ENCODE measurements at regions of chr3 and their contacts with region 1.

Region 1: DNA sequence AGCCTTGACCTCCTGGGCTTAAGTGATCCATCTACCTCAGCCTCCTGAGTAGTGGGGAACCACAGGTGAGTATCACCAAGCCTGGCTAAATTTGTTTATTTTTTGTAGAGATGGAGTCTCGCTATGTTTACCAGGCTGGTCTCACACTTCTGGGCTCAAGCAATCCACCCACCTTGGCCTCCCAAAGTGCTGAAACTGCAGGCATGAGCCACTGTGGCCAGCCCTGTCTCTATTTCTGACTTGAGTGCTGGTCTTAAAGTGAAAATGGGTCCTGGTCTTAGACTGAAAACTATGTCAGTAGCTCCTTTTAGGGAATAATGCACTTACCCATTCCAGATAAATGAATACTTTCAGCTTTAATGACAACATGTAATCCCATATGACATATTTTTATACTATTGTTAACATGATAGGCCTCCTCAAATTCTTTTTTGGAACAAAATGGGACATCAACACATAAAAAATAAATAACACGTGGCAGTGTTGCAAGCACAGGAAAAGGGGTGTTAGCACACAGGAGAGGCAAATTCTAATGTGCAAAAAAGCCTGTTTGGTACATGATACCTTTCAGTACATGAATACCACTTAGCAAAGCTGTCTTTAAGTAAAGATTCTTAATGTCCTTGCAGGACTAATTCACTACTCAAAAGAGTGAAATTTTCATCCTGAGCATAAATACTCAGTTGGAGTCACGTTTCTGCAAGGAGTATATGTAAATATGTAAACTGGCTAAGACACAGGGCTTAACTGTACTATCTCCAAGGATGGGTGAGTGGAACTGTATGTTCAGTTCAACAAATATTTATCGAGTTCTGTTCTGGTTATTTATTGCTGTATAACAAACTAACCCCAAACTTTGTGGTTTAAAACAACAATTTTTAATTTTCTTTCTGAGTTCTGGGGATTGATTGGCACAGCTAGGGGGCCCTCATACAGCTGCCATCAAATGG is 194.7 kb downstream of the NR1D2 start:
- DNase-seq: no peak
- ATAC-seq: no peak
- H3K4me3 ChIP-seq: no peak overlapping the region
- H3K27ac ChIP-seq: no peak overlapping the region
- H3K4me1 ChIP-seq: no peaks in the 10 kb centered on the region
- H3K27me3 ChIP-seq: no peaks in the 10 kb centered on the region
- CTCF ChIP-seq: no peak

Region 2: GRCh38 chr3:23829242-23829934 is 310.4 kb before region 1 on chr3:
- CTCF ChIA-PET with region 1: no interaction called
- POLR2A ChIA-PET with region 1: no interaction called
- in situ Hi-C with region 1: no loop called
- intact Hi-C with region 1: no loop called
- DNase-seq: no peak
- ATAC-seq: no peak
- H3K4me3 ChIP-seq: no peak overlapping the region
- H3K27ac ChIP-seq: no peak overlapping the region
- H3K4me1 ChIP-seq: peaks cover 7% of the 10 kb centered on the region
- H3K27me3 ChIP-seq: no peaks in the 10 kb centered on the region
- CTCF ChIP-seq: no peak

Region 3: DNA sequence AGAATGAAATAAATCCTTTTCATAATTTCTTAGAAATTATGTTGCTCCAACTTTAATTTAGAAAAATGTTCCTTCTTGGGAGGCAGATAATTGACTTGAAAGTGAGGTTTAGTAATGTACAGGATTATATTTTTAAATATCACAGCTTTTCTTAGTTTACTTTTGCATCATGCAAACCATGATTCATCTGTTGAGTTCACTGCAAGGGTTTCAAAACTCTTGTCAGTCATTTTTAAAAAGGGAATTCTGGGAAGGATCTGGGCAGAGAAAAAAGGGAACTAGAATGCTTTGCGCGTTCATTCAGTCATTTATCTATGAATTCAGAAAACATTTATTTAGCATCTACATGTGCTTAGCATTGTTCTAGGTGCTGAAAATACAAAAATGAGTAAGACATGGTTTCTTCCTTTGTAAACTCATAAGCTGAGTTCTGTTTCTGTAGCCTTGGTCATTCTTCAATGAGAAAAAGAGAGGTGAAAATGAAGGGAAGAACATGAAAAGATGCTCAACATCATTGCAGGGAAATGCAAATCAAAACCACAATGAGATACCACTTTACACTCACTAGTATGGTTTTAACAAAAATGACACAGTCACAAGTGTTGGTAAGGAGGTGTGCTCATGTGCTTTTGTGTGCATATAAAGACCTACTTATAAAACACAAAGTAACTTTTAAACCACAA is 14.4 kb after region 1 on chr3:
- CTCF ChIA-PET with region 1: no interaction called
- POLR2A ChIA-PET with region 1: no interaction called
- in situ Hi-C with region 1: no loop called
- intact Hi-C with region 1: no loop called
- DNase-seq: no peak
- ATAC-seq: no peak
- H3K4me3 ChIP-seq: no peak overlapping the region
- H3K27ac ChIP-seq: no peak overlapping the region
- H3K4me1 ChIP-seq: no peaks in the 10 kb centered on the region
- H3K27me3 ChIP-seq: no peaks in the 10 kb centered on the region
- CTCF ChIP-seq: no peak

Region 4: DNA sequence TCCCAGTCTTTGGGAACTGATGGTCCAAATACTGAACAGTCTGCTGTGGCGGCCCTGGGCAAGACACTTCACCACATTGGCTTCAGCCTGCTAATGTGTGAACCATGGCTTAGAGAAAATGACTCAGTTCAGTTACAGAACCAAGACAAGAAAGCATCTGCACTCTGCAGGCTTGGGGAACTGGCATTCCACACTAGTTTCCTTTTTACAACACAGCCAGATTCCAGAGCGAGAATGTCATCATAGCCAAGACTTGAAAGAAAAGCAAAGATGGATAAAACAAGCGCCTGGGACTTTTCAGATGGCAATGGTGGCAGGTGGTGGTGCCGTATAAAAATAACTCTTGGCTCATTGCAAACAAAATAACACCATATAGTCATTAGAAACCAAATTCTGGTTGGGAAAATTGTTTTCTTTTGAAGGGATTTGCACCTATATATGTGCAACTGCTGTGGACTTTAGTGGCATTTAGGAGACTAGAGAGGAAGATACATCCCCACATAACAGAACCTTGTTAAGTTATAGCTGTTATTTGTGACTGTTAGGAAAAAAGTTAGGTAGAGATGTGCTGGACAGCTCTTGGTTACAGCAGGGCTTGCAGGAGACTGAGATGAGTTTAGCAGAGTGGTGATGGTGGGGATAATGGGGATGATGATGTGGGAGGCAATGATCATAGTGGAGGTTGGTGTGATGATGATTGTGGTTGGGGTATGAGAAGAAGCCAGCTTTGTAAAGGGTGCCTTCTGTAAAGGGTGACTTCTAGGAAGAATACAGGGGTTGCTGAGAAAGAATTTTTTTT is 81.3 kb after region 1 on chr3:
- CTCF ChIA-PET with region 1: no interaction called
- POLR2A ChIA-PET with region 1: no interaction called
- in situ Hi-C with region 1: no loop called
- intact Hi-C with region 1: loop called (anchors 2 kb)
- DNase-seq: peak; percentile 18
- ATAC-seq: 0 out of 2 replicates have a peak, but pooled peaks have one; percentile 56
- H3K4me3 ChIP-seq: no peak overlapping the region
- H3K27ac ChIP-seq: no peak overlapping the region
- H3K4me1 ChIP-seq: no peaks in the 10 kb centered on the region
- H3K27me3 ChIP-seq: no peaks in the 10 kb centered on the region
- CTCF ChIP-seq: no peak

Measured in Panc1 (cell line).